ENCODE measurements at regions of chr10 and their contacts with region 1.

Region 1: DNA sequence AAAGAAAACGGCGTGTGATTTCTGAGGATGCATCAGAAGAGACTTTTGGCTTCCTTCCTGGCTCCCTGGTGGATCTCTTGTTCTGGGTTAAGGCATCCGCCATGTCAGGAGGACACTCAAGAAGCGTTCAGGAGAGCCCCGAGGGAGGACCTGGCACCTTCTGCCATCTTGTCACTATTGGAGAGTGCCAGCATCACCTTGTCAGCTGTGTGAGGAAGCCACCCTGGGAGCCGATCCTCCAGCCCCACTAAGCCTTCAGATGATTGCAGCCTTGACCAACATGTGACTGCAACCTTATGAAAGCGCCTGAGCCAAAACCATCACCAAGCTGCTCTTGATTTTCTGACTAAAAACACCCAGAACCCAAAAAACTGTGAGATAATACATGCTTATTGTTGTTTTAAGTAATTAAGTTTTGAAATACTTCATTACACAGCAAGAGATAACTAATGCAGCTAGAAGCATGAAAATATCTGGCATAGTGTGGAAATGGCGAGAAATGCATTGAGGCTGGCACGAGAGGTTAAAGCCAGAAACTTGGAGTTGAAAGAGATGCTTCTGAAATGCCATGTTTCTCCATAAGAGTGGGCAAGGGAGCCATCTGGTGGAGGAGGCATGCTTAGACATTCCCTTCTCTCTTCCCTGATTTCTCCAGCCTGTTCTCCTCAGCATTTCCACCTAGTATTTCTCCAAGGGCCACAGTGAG is 5.4 kb upstream of the ZFYVE27 start:
- DNase-seq: peak; percentile 72
- ATAC-seq: peak; percentile 55
- H3K4me3 Mint-ChIP-seq: no peak overlapping the region
- H3K27ac Mint-ChIP-seq: no peak overlapping the region
- H3K4me1 Mint-ChIP-seq: peaks cover 10% of the 10 kb centered on the region
- H3K27me3 Mint-ChIP-seq: peaks cover 4% of the 10 kb centered on the region

Region 2: GRCh38 chr10:97572214-97572989 is 159.1 kb before region 1 on chr10 and contains the start of gene ANKRD2:
- CTCF ChIA-PET with region 1: interaction called, 5 read pairs
- POLR2A ChIA-PET with region 1: no interaction called
- intact Hi-C with region 1: loop called in 1 of 2 experiments (anchors 1 kb)
- DNase-seq: peak; percentile 79
- ATAC-seq: peak; percentile 84
- H3K4me3 Mint-ChIP-seq: no peak within 1 kb of the TSS
- H3K27ac Mint-ChIP-seq: no peak within 1 kb of the TSS
- H3K4me1 Mint-ChIP-seq: no peaks in the 10 kb centered on the region
- H3K27me3 Mint-ChIP-seq: no peaks in the 10 kb centered on the region
- total RNA-seq, gene ANKRD2: not detected

Region 3: GRCh38 chr10:97676770-97677581 is 54.5 kb before region 1 on chr10:
- CTCF ChIA-PET with region 1: interaction called, 7 read pairs
- POLR2A ChIA-PET with region 1: no interaction called
- intact Hi-C with region 1: loop called (anchors 1 kb)
- DNase-seq: peak; percentile 64
- ATAC-seq: peak; percentile 84
- H3K4me3 Mint-ChIP-seq: no peak overlapping the region
- H3K27ac Mint-ChIP-seq: no peak overlapping the region
- H3K4me1 Mint-ChIP-seq: peaks cover 5% of the 10 kb centered on the region
- H3K27me3 Mint-ChIP-seq: no peaks in the 10 kb centered on the region

Region 4: GRCh38 chr10:97701438-97702069 is 29.9 kb before region 1 on chr10:
- CTCF ChIA-PET with region 1: interaction called, 384 read pairs
- POLR2A ChIA-PET with region 1: interaction called, 3 read pairs
- intact Hi-C with region 1: loop called (anchors 1 kb)
- DNase-seq: peak; percentile 67
- ATAC-seq: peak; percentile 99
- H3K4me3 Mint-ChIP-seq: no peak overlapping the region
- H3K27ac Mint-ChIP-seq: no peak overlapping the region
- H3K4me1 Mint-ChIP-seq: no peaks in the 10 kb centered on the region
- H3K27me3 Mint-ChIP-seq: peaks cover 6% of the 10 kb centered on the region

Region 5: DNA sequence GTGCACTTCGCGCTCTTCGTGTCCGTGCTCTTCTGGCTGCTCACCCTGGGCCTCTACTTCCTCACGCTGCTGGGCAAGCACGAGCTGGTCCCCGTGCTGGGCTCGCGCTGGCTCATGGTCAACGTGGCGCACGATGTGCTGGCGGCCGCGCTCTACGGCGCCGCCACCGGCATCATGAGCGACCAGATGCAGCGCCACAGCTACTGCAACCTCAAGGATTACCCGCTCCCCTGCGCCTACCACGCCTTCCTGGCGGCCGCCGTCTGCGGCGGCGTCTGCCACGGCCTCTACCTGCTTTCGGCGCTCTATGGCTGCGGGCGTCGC is 17.5 kb before region 1 on chr10:
- CTCF ChIA-PET with region 1: interaction called, 384 read pairs
- POLR2A ChIA-PET with region 1: interaction called, 6 read pairs
- intact Hi-C with region 1: loop called (anchors 1 kb)
- DNase-seq: peak; percentile 74
- ATAC-seq: peak; percentile 85
- H3K4me3 Mint-ChIP-seq: peak overlapping the region; percentile 79
- H3K27ac Mint-ChIP-seq: peak overlapping the region; percentile 88
- H3K4me1 Mint-ChIP-seq: peaks cover 11% of the 10 kb centered on the region
- H3K27me3 Mint-ChIP-seq: peaks cover 19% of the 10 kb centered on the region

Region 6: DNA sequence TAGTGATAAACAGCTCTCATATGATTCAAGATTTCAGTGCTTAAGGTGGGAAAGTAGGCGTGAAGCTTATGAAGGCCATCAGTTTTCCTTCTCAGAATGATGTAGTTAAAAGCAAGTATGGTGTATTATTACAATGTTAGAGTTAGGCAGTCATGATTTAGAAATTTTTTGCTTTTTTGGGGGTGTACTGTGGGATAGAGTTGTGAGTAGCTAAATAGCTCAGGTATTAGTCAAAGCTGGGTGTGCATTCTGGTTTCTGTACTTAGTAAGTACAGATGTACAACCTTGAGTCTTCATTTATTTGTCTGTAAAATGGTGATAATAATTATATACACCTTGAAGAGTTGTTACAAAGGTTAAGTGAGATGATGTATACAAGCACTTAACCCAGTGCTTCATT is 455.2 kb after region 1 on chr10:
- CTCF ChIA-PET with region 1: no interaction called
- POLR2A ChIA-PET with region 1: no interaction called
- intact Hi-C with region 1: no loop called
- DNase-seq: no peak
- ATAC-seq: no peak
- H3K4me3 Mint-ChIP-seq: no peak overlapping the region
- H3K27ac Mint-ChIP-seq: no peak overlapping the region
- H3K4me1 Mint-ChIP-seq: peaks cover 27% of the 10 kb centered on the region
- H3K27me3 Mint-ChIP-seq: no peaks in the 10 kb centered on the region

Measured in activated CD4-positive, alpha-beta T cell treated with anti-CD3 and anti-CD28 coated beads for 36 hours (primary cell).